ENCODE measurements at regions of chr5 and their contacts with region 1.

Region 1: DNA sequence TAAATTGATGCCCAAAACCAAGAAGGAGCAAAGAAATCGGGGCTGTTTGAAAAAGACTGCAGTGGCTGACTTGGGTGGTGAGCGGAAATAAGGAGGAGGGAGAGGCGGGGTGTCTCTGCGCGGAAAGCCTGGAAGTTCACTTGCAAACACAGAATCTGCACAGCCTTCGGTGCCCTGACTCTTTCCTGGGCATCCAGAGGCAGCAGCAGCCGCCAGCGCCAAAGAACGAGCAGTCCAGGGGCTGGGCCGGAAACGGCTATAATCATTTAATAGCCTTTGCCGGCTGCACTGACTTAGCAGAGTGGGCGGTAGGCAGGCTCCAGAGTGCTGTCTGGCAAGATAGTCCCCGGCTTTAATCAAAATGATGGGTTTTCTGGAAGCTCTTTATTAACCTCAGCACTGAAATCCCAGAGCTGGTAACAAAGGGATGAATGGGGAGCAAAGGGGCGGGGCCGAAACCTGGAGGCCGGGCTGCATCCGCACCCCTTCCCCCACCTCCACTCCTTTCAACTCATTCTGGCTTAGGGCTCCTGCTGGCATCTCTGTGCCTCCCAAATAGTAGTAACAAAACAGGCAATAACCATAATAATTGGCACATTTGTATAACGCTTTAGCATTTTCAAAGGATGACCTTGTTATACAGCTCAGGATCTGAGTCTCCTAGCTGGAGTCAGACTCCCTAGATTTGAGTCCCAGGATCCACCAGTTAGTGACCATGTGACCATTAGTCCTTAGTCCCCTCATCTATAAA is 35.8 kb downstream of the PCDHAC2 start:
- DNase-seq: no peak
- ATAC-seq: no peak
- H3K4me3 ChIP-seq: peak overlapping the region in 1 of 2 donors; percentile 10
- H3K4me3 Mint-ChIP-seq: peak overlapping the region in 1 of 3 donors; percentile 24
- H3K27ac ChIP-seq: no peak overlapping the region
- H3K27ac Mint-ChIP-seq: no peak overlapping the region
- H3K4me1 ChIP-seq: peaks cover 0 to 6% of the 10 kb centered on the region in 2 experiments
- H3K4me1 Mint-ChIP-seq: peaks cover 5 to 13% (median 6%) of the 10 kb centered on the region in 3 donors
- H3K27me3 ChIP-seq: peaks cover 0 to 19% of the 10 kb centered on the region in 2 experiments
- H3K27me3 Mint-ChIP-seq: peaks cover 28 to 42% of the 10 kb centered on the region in 2 donors

Region 2: DNA sequence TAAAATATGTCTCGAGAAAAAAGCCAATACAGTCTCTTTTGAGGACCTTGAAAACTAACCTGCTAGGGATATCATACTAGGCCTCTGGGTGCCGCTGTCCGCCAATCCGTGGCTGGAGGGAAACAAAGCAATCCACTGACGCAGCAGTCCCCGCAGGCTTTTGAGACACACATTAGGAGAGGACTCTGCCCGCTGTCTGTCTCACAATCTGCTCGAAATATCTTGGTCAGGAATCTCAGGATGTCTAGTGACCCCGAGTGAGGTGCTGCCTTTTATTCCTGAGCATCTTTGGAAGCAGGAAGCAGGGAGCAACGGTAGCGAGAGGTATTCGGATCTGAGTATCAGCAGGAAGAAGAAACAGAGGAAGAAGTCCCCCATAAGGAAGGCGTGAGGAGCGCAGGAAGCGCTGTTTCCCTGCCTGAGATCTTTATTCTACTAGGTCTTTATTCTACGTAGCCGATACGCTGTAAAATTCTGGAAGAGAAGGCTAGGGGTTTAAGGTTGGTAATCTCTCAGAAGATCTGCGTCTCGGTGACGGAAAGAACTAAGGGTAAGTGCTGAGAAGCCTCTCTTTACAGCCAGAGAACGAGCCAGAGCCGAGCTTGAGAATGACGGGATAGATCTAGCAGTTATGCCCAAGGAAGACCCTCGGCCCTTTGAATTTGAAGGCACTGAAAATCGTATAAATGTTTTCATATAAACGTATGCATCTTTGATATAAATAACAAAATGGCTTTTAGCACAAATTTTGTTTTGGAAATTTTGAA is 324.2 kb after region 1 on chr5:
- CTCF ChIA-PET with region 1: interaction called in 1 of 2 experiments, 11 read pairs
- POLR2A ChIA-PET with region 1: no interaction called
- DNase-seq: peak; percentile 34 to 78 (median 62)
- ATAC-seq: peak; percentile 92 to 95 (median 94)
- H3K4me3 ChIP-seq: peak overlapping the region; percentile 45 to 50
- H3K4me3 Mint-ChIP-seq: peak overlapping the region; percentile 84 to 91 (median 86)
- H3K27ac ChIP-seq: peak overlapping the region; percentile 3
- H3K27ac Mint-ChIP-seq: peak overlapping the region; percentile 92 to 93
- H3K4me1 ChIP-seq: peaks cover 0 to 8% of the 10 kb centered on the region in 2 experiments
- H3K4me1 Mint-ChIP-seq: peaks cover 11 to 13% (median 13%) of the 10 kb centered on the region in 3 donors
- H3K27me3 ChIP-seq: peaks cover 6 to 29% of the 10 kb centered on the region in 2 experiments
- H3K27me3 Mint-ChIP-seq: peaks cover 33 to 48% of the 10 kb centered on the region in 2 donors